Heart left ventricle (tissue), 16 donors: ENCODE measurements at regions of chr16 and their contacts with region 1.

Region 1: DNA sequence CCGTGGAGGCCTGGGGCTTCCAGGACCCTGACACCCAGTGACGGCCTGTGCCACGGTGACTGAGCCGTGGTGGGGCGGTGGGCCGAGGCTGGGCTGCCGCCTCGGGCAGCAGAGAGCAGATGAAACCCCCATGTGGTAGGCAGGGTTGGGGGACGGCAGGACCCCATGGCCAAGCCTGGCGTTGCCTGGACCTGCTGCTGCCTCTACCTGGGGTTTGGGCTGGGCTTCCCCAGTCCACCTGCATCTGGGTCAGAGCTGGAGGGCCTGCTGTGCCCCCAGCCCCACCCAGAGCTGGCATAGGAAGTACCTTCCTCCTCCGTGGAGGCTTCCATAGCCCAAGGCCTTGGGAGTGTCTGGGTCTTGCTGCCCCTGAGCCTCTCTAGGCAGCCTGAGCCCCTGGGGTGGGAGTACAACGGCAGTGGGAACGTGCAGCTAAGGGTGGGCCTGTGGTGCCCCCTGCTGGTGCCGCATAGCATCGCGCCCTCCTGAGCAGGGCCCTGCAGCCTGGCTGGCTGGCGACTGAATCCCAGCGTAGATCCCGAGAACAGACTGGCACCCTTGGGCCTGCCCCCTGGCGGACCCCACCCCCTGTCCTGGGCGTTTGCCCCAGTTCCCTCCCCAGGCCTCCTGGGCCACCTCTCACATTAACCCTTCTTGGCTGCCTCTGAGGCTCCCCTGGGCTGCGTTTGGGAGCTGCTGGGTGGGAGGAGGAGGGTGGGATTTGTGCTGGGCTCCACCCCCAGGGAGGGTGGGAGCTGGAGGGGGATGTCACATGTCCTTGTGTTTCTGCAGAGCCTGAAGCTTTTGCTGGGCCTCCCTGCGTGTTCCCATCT is 12.6 kb upstream of the ATP6V0C start:
- DNase-seq: peak; percentile 81 to 91 (median 84)
- ATAC-seq: peak; percentile 72 to 87 (median 83)
- H3K4me3 ChIP-seq: peak overlapping the region in 9 of 12 donors; percentile 9 to 56 (median 38)
- H3K27ac ChIP-seq: peak overlapping the region in 5 of 12 donors; percentile 42 to 64 (median 61)
- H3K4me1 ChIP-seq: peaks cover 0 to 65% (median 42%) of the 10 kb centered on the region in 12 donors
- H3K27me3 ChIP-seq: no peaks in the 10 kb centered on the region
- CTCF ChIP-seq: peak; percentile 97 to 100 (median 99)
- POLR2A ChIP-seq: no peak

Region 2: GRCh38 chr16:2194852-2195321 is 306.2 kb before region 1 on chr16:
- intact Hi-C with region 1: loop called in 1 of 10 experiments (anchors 10 kb)
- DNase-seq: no peak
- ATAC-seq: peak in 3 of 4 donors; percentile 31 to 41 (median 31)
- H3K4me3 ChIP-seq: no peak overlapping the region
- H3K27ac ChIP-seq: no peak overlapping the region
- H3K4me1 ChIP-seq: peaks cover 0 to 24% (median 8%) of the 10 kb centered on the region in 12 donors
- H3K27me3 ChIP-seq: peaks cover 8 to 45% (median 23%) of the 10 kb centered on the region in 9 donors
- CTCF ChIP-seq: peak in 7 of 12 donors; percentile 11 to 40 (median 19)
- POLR2A ChIP-seq: no peak

Region 3: DNA sequence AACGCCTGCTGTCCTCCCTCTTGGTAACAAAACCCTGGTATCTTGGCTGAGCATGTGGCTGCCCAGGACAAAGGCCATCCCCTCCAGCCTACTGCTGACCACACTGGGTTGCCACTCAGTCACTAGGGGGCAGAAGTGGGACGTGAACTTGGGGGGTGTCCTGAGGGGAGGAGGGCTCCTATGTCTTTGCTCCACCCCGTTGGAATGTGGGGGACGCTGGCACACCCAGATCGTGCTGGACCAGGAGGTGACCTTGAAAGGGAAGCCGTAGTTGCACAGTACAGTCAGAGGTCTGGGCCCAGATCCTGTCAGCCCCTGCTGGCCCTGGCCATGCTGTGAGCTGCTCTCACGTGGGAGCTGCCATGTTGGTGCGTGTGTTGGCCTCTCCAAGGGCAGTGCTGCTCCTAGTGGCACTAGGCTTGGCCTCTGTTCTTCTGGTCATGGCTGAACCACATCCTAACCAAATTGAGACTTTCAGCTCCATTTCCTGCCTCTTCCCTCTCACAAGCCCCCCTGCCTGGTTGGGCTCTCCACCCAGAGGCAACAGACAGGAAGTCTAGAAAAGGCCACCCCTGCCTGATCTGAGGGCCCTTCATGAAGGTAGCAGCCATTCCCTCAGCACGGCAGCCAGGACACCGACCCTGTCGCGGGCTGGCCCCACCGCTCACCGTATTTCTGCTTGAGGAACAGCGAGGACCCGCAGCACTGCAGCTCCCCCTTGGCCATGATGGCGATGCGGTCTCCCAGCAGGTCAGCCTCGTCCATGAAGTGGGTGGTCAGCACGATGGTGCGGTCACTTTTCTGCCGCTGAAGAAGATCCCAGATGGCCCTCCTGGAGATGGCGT is 204.3 kb before region 1 on chr16:
- intact Hi-C with region 1: loop called in 2 of 10 experiments (anchors 5 to 10 kb)
- DNase-seq: peak in 1 of 5 donors; percentile 45
- ATAC-seq: peak in 3 of 4 donors; percentile 64 to 74 (median 70)
- H3K4me3 ChIP-seq: no peak overlapping the region
- H3K27ac ChIP-seq: no peak overlapping the region
- H3K4me1 ChIP-seq: no peaks in the 10 kb centered on the region
- H3K27me3 ChIP-seq: no peaks in the 10 kb centered on the region
- CTCF ChIP-seq: peak in 10 of 12 donors; percentile 17 to 52 (median 33)
- POLR2A ChIP-seq: no peak

Region 4: GRCh38 chr16:2429034-2429770 is 71.9 kb before region 1 on chr16 and contains the start of gene CCNF:
- intact Hi-C with region 1: loop called (anchors 2 to 10 kb)
- DNase-seq: peak; percentile 98 to 99 (median 98)
- ATAC-seq: peak; percentile 98 to 99 (median 99)
- H3K4me3 ChIP-seq: peak within 1 kb of the TSS; percentile 60 to 98 (median 86)
- H3K27ac ChIP-seq: peak within 1 kb of the TSS in 11 of 12 donors; percentile 1 to 81 (median 67)
- H3K4me1 ChIP-seq: peaks cover 0 to 22% (median 14%) of the 10 kb centered on the region in 12 donors
- H3K27me3 ChIP-seq: no peaks in the 10 kb centered on the region
- CTCF ChIP-seq: peak in 5 of 12 donors; percentile 5 to 22 (median 18)
- POLR2A ChIP-seq: peak in 1 of 2 donors; percentile 48
- total RNA-seq, gene CCNF: 0.67 to 6.0 (median 1.6) TPM

Region 5: GRCh38 chr16:2513405-2514322 is 12.5 kb after region 1 on chr16 and contains the start of gene ATP6V0C:
- intact Hi-C with region 1: no loop called
- DNase-seq: peak; percentile 91 to 96 (median 92)
- ATAC-seq: peak; percentile 71 to 90 (median 88)
- H3K4me3 ChIP-seq: peak within 1 kb of the TSS; percentile 87 to 100 (median 96)
- H3K27ac ChIP-seq: peak within 1 kb of the TSS; percentile 93 to 99 (median 95)
- H3K4me1 ChIP-seq: peaks cover 11 to 80% (median 44%) of the 10 kb centered on the region in 12 donors
- H3K27me3 ChIP-seq: no peaks in the 10 kb centered on the region
- CTCF ChIP-seq: no peak
- POLR2A ChIP-seq: peak; percentile 10 to 90
- total RNA-seq, gene ATP6V0C: 61.6 to 209 (median 129) TPM

Region 6: DNA sequence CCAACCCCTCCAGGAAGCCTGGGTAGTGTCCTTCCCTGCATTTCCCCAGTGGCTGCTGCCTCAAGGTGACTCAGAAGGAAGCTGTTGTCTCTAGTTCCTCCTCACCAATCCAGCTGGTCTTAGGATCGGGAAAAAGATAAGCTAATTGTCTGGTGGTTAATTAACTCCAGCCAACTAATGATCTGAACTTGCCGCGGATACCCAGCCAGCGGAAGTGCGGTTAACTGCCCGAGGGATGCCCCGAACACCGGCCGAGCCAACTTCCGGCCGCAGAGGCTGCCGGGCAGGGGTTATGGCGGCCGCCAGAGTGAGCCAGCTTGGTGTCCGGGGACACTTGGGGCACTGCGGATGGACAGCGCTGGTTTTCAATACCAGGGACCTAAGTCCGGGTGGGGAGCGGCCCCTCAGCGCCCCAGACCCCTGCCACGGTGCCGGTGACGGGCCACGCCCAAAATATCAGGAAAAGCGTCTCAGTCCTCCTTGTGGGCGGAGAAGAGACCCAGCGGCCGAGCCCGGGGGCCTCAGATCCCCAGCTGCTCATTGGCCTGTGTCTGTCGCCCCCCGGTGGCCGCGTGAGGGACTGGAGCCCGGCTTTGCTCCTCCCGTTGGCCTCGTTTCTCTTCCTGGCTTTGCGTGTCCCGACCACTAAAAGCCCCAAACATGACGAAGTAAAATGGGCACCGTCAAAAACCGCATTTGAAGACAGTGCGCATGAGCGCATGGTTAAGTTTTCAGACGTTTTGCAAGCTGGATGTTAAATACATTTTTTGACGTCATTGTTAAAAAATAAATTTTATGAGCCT is 367.1 kb after region 1 on chr16:
- intact Hi-C with region 1: no loop called
- DNase-seq: peak; percentile 93 to 97 (median 94)
- ATAC-seq: peak; percentile 96 to 99 (median 98)
- H3K4me3 ChIP-seq: peak overlapping the region; percentile 47 to 84 (median 72)
- H3K27ac ChIP-seq: peak overlapping the region; percentile 88 to 98 (median 94)
- H3K4me1 ChIP-seq: peaks cover 0 to 16% (median 3%) of the 10 kb centered on the region in 12 donors
- H3K27me3 ChIP-seq: peaks cover 0 to 19% (median 0%) of the 10 kb centered on the region in 9 donors
- CTCF ChIP-seq: peak; percentile 97 to 99 (median 98)
- POLR2A ChIP-seq: peak in 1 of 2 donors; percentile 50